ENCODE measurements at regions of chr9 and their contacts with region 1.

Region 1: GRCh38 chr9:125794708-125795107 is 47.5 kb downstream of the PBX3 start:
- DNase-seq: no peak
- H3K4me3 ChIP-seq: no peak overlapping the region
- H3K27ac ChIP-seq: no peak overlapping the region
- H3K27me3 ChIP-seq: no peaks in the 10 kb centered on the region
- CTCF ChIP-seq: no peak

Region 2: GRCh38 chr9:126146254-126147145 is 351.8 kb after region 1 on chr9:
- intact Hi-C with region 1: loop called in 1 of 2 experiments (anchors 5 kb)
- DNase-seq: peak in 3 of 10 donors; percentile 26 to 40 (median 26)
- H3K4me3 ChIP-seq: no peak overlapping the region
- H3K27ac ChIP-seq: no peak overlapping the region
- H3K27me3 ChIP-seq: peaks cover 0 to 5% (median 0%) of the 10 kb centered on the region in 45 donors
- CTCF ChIP-seq: peak in 37 of 56 donors; percentile 12 to 51 (median 30)

Region 3: DNA sequence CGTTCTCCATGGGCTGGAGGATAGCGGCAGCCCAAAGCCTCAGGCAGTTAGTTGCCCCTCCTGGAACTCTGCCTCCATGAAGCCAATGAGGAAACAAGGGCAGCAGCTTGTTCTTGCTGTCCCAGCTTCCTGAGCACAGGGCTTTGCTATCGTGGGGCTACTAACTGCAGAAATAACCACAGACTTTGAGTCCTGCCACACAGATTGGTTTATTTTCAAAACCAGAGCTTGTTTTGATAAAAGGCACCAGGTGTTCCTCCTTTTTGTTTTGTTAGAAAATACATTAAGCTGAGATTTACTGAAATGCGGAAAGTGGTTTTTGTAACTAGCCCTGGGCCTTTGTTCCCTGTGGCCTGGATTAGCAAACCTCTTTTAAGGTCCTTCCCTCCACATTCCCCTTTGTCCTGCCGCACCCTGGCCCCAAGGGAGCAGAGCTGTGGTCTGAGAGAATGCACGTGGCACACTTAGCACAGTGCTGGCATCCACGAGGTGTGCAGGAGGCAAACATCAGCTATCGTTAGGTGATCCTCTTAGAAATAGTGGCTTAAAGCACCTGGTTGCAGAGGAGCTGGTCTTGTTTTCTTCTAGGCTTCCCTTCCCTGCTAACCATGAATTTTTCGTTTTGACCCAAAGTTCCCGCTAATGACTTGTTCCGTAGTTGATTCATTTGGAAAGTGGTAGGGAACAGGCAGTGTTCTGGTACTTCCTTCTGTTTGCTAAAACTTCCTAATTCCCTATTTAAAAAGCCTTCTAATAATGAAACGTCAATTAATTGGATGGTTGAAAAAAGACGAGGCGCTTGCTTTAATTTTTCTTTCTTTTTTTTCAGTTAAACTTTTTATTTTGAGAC is 553.4 kb after region 1 on chr9:
- intact Hi-C with region 1: no loop called
- DNase-seq: no peak
- H3K4me3 ChIP-seq: peak overlapping the region in 1 of 59 donors; percentile 9
- H3K27ac ChIP-seq: peak overlapping the region; percentile 13 to 98 (median 80)
- H3K27me3 ChIP-seq: no peaks in the 10 kb centered on the region
- CTCF ChIP-seq: no peak

Measured in dorsolateral prefrontal cortex (tissue), 120 donors.